ENCODE measurements at regions of chr2 and their contacts with region 1.

Region 1: DNA sequence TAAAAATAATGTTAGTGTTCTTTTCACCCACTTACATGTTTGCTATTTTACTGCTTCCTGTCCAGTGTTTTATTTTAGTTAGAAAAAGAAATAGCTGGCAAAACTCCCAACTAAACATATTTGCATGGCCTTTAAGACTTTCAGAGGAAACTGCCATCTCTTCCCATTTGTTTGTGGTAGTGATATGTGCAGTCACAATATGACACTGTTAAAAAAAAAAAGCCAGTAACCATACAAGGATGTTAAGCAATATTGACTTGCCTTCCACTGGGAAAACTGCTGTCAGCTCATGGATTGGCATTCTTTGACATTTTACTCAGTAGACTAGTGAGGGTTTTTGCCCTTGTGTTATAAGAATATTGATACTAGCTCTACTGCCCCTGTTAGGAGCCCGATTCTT is 29.1 kb downstream of the XIRP2 start:
- DNase-seq: no peak
- H3K4me3 ChIP-seq: no peak overlapping the region
- CTCF ChIP-seq: no peak

Region 2: DNA sequence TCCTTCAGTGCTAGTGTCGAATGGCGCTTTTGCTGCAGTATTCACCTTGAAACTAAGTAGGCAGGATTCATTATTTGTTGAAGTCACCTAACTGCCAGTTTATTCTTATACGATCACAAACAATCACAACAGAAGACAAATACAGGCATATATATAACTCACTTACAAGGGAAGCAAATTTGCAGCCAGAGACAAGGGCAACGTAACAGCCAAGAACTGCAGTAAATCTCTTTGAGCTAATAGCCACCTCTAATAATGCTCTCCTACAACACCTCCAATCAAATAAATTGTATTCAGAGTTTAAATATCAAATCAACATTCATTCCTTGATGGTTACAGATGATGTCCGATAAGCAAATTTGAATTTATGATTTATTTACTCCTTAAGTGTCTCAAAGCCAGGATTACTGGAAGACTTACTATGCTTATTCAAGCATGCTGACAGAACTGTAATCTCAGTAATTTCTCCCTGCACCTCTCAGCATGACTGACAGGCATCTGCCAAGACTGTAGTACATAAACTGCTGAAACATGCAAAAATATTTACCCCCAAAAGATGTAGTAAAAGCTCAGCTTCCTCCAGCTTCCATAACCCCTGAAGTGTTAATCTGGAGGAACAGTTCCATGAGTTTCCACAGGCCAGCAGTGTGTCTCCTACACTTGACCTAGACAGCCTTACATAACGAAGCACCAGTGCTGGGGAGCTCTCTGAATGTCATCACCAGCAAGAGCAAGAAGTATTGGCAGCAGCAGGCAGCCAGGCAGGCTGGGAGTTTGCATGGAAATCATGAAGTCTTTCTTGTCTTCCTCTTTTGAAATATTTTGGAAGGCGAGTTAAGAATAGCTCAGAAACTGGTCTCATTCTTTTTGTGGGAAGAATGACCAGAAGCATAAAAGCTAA is 768.7 kb before region 1 on chr2:
- in situ Hi-C with region 1: no loop called
- DNase-seq: no peak
- H3K4me3 ChIP-seq: no peak overlapping the region
- CTCF ChIP-seq: no peak

Region 3: DNA sequence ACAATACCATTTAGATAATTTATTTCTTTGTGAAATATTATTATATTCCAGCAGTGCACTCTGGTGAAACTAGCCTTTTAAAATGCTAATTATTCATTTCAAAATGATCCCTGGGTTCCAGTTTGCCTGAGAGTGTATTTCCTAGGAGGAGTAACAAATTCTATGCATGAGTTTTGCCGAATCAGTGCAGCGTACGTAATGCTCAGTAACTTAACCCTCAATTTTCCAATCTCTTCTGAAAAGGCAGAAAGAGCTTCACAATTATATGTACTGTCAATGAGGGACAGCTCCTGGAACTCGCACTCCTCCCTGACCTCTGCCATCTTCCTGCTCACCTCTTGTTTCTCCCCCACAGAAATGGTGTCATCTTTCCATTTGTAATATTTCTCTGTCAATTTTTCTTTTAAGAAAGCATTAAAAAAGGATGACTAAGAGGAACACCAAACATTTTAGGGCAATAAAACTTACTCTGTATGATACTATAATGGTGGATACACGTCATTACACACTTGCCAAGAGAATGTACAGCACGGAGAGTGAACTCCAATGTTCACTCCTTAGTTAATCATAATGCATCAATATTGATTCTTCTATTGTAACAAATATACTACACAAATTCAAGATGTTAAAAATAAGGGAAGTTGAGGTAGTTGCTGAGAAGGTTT is 54.8 kb before region 1 on chr2:
- in situ Hi-C with region 1: no loop called
- DNase-seq: no peak
- H3K4me3 ChIP-seq: no peak overlapping the region
- CTCF ChIP-seq: no peak

Region 4: GRCh38 chr2:166882851-166883250 is 34.6 kb before region 1 on chr2:
- in situ Hi-C with region 1: loop called (anchors 5 kb)
- DNase-seq: no peak
- H3K4me3 ChIP-seq: no peak overlapping the region
- CTCF ChIP-seq: no peak

Region 5: DNA sequence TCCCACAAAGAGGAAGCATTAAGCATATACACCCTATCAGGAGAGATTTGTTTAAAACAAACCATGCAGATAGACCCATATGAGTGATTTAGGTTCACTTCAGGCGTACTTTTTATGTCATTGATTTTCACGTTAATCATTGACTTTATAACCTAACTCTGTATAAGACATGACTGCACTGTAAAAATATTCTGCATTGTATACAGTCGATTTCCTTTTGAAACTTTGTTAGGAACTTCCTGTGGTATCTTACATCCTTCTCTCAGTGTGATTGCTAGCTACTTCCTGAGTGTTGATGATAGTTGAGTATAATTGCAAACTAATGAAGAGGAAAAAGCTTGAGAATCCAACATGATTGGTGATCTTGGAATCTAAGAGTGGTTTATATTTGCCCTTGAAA is 40.3 kb after region 1 on chr2:
- in situ Hi-C with region 1: loop called (anchors 5 kb)
- DNase-seq: no peak
- H3K4me3 ChIP-seq: no peak overlapping the region
- CTCF ChIP-seq: no peak